ENCODE measurements at regions of chr4 and their contacts with region 1.

Region 1: GRCh38 chr4:3880615-3881120 is 114.5 kb downstream of the ADRA2C start:
- DNase-seq: no peak
- H3K4me3 ChIP-seq: no peak overlapping the region
- H3K27ac ChIP-seq: no peak overlapping the region
- H3K27me3 ChIP-seq: peaks cover 50% of the 10 kb centered on the region
- CTCF ChIP-seq: peak; percentile 58

Region 2: DNA sequence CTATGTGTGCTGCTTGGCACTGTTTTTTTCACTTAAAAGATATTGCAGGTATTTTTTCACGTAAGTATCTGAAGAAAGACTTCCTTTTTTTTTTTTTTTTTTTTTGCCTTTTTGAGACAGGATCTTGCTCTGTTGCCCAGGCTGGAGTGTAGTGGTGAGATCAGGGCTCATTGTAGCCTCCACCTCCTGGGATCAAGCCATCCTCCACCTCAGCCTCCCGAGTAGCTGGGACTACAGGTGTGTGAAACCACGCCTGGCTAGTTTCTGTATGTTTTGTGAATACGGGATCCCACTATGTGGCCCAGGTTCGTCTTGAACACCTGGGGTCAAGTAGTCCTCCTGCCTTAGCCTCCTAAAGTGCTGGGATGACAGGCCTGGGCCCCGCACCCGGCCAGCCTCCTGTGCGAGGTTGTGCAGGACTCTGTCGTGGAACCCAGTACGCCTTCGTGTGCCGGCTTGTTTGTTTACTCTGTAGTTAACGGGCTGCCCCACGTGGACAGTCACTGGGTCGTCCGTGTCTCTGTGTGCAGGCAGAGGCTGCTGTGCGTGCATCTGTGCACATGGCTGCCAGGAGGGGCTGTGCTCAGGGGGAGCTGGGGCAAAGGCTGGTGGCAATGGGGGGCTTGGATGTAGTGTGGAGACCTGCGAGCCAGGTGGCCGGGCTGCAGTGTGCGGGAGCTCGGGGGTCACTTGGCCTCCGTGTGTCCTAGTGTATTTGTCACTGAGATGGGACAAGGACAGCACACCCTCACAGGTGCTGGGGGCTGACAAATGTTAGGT is 65.0 kb after region 1 on chr4:
- CTCF ChIA-PET with region 1: interaction called, 10 read pairs
- POLR2A ChIA-PET with region 1: no interaction called
- DNase-seq: no peak
- H3K4me3 ChIP-seq: no peak overlapping the region
- H3K27ac ChIP-seq: no peak overlapping the region
- H3K27me3 ChIP-seq: no peaks in the 10 kb centered on the region
- CTCF ChIP-seq: no peak

Measured in AG04450 (cell line).